Breast epithelium (tissue), 4 donors: ENCODE measurements at regions of chr5 and their contacts with region 1.

Region 1: GRCh38 chr5:151492729-151493128 is 45.3 kb downstream of the SLC36A1 start:
- DNase-seq: no peak
- H3K4me3 ChIP-seq: no peak overlapping the region
- H3K27ac ChIP-seq: no peak overlapping the region
- H3K4me1 ChIP-seq: no peaks in the 10 kb centered on the region
- H3K27me3 ChIP-seq: no peaks in the 10 kb centered on the region
- CTCF ChIP-seq: no peak
- POLR2A ChIP-seq: no peak

Region 2: GRCh38 chr5:151447174-151448037 is 45.3 kb before region 1 on chr5 and contains the start of gene SLC36A1:
- intact Hi-C with region 1: loop called (anchors 10 kb)
- DNase-seq: peak; percentile 90 to 92
- H3K4me3 ChIP-seq: peak within 1 kb of the TSS; percentile 61 to 71 (median 65)
- H3K27ac ChIP-seq: peak within 1 kb of the TSS; percentile 65 to 67
- H3K4me1 ChIP-seq: no peaks in the 10 kb centered on the region
- H3K27me3 ChIP-seq: no peaks in the 10 kb centered on the region
- CTCF ChIP-seq: peak; percentile 92 to 95 (median 93)
- POLR2A ChIP-seq: no peak
- total RNA-seq, gene SLC36A1: 10.8 to 14.1 (median 11.4) TPM

Region 3: GRCh38 chr5:151480384-151481293 is 12.1 kb before region 1 on chr5:
- intact Hi-C with region 1: no loop called
- DNase-seq: no peak
- H3K4me3 ChIP-seq: no peak overlapping the region
- H3K27ac ChIP-seq: no peak overlapping the region
- H3K4me1 ChIP-seq: no peaks in the 10 kb centered on the region
- H3K27me3 ChIP-seq: no peaks in the 10 kb centered on the region
- CTCF ChIP-seq: no peak
- POLR2A ChIP-seq: no peak